Activated CD4-positive, alpha-beta T cell treated with anti-CD3 and anti-CD28 coated beads for 36 hours (primary cell): ENCODE measurements at regions of chr2 and their contacts with region 1.

Region 1: DNA sequence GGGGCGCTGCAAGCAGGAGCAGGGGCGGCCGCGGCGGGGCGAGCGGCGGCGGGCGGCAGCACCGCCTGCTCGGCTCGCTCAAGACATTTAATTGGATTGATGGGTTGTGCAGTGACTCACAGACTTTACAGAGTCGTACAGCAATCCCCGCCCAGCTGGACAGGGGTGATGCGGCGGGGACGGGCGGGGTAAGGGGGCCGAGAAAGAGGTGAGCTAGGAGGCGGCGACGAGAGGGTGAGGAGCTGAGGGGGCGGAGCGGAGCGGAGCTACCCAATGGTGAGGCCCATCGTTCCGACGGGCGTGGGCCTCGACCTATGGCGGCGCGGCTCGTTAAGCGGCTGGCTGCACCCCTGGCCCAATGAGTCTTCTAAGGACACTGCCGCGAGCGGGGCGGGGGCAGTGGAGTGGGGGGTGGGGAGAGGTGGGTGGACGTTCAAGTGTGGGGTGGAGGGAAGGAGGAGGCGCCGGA is 97.1 kb upstream of the SERTAD2 start:
- DNase-seq: peak; percentile 99
- ATAC-seq: peak; percentile 90
- H3K4me3 Mint-ChIP-seq: peak overlapping the region; percentile 92
- H3K27ac Mint-ChIP-seq: peak overlapping the region; percentile 92
- H3K4me1 Mint-ChIP-seq: peaks cover 24% of the 10 kb centered on the region
- H3K27me3 Mint-ChIP-seq: no peaks in the 10 kb centered on the region

Region 2: GRCh38 chr2:64609227-64609941 is 141.5 kb before region 1 on chr2:
- CTCF ChIA-PET with region 1: interaction called, 4 read pairs
- POLR2A ChIA-PET with region 1: no interaction called
- intact Hi-C with region 1: loop called in 1 of 2 experiments (anchors 1 kb)
- DNase-seq: peak; percentile 82
- ATAC-seq: peak; percentile 61
- H3K4me3 Mint-ChIP-seq: peak overlapping the region; percentile 65
- H3K27ac Mint-ChIP-seq: no peak overlapping the region
- H3K4me1 Mint-ChIP-seq: peaks cover 25% of the 10 kb centered on the region
- H3K27me3 Mint-ChIP-seq: no peaks in the 10 kb centered on the region

Region 3: GRCh38 chr2:64698668-64699444 is 52.0 kb before region 1 on chr2:
- CTCF ChIA-PET with region 1: no interaction called
- POLR2A ChIA-PET with region 1: interaction called, 4 read pairs
- intact Hi-C with region 1: loop called (anchors 1 to 5 kb)
- DNase-seq: no peak
- ATAC-seq: peak; percentile 89
- H3K4me3 Mint-ChIP-seq: no peak overlapping the region
- H3K27ac Mint-ChIP-seq: peak overlapping the region; percentile 70
- H3K4me1 Mint-ChIP-seq: peaks cover 54% of the 10 kb centered on the region
- H3K27me3 Mint-ChIP-seq: no peaks in the 10 kb centered on the region

Region 4: GRCh38 chr2:64795024-64795592 is 44.3 kb after region 1 on chr2:
- CTCF ChIA-PET with region 1: interaction called, 3 read pairs
- POLR2A ChIA-PET with region 1: no interaction called
- intact Hi-C with region 1: loop called in 1 of 2 experiments (anchors 1 kb)
- DNase-seq: no peak
- ATAC-seq: no peak
- H3K4me3 Mint-ChIP-seq: no peak overlapping the region
- H3K27ac Mint-ChIP-seq: no peak overlapping the region
- H3K4me1 Mint-ChIP-seq: no peaks in the 10 kb centered on the region
- H3K27me3 Mint-ChIP-seq: peaks cover 2% of the 10 kb centered on the region

Region 5: GRCh38 chr2:64859312-64860212 is 108.7 kb after region 1 on chr2:
- CTCF ChIA-PET with region 1: interaction called, 3 read pairs
- POLR2A ChIA-PET with region 1: no interaction called
- intact Hi-C with region 1: loop called in 1 of 2 experiments (anchors 5 kb)
- DNase-seq: peak; percentile 23
- ATAC-seq: no peak
- H3K4me3 Mint-ChIP-seq: no peak overlapping the region
- H3K27ac Mint-ChIP-seq: no peak overlapping the region
- H3K4me1 Mint-ChIP-seq: peaks cover 4% of the 10 kb centered on the region
- H3K27me3 Mint-ChIP-seq: peaks cover 8% of the 10 kb centered on the region

Region 6: GRCh38 chr2:65129826-65130663 is 379.2 kb after region 1 on chr2 and contains the start of gene RAB1A:
- CTCF ChIA-PET with region 1: no interaction called
- POLR2A ChIA-PET with region 1: no interaction called
- intact Hi-C with region 1: loop called in 1 of 2 experiments (anchors 1 kb)
- DNase-seq: peak; percentile 100
- ATAC-seq: peak; percentile 95
- H3K4me3 Mint-ChIP-seq: peak within 1 kb of the TSS; percentile 100
- H3K27ac Mint-ChIP-seq: peak within 1 kb of the TSS; percentile 100
- H3K4me1 Mint-ChIP-seq: peaks cover 30% of the 10 kb centered on the region
- H3K27me3 Mint-ChIP-seq: no peaks in the 10 kb centered on the region
- total RNA-seq, gene RAB1A: 77.1 to 84.8 TPM